WTC11 (cell line): ENCODE measurements at regions of chr11 and their contacts with region 1.

Region 1: GRCh38 chr11:35200811-35201341 is 61.9 kb downstream of the CD44 start:
- DNase-seq: no peak
- ATAC-seq: no peak
- H3K4me3 Mint-ChIP-seq: no peak overlapping the region
- H3K27ac Mint-ChIP-seq: no peak overlapping the region
- H3K4me1 Mint-ChIP-seq: peaks cover 6% of the 10 kb centered on the region
- H3K27me3 Mint-ChIP-seq: no peaks in the 10 kb centered on the region; the same call in 1 of the 2 replicates
- CTCF ChIP-seq: no peak

Region 2: DNA sequence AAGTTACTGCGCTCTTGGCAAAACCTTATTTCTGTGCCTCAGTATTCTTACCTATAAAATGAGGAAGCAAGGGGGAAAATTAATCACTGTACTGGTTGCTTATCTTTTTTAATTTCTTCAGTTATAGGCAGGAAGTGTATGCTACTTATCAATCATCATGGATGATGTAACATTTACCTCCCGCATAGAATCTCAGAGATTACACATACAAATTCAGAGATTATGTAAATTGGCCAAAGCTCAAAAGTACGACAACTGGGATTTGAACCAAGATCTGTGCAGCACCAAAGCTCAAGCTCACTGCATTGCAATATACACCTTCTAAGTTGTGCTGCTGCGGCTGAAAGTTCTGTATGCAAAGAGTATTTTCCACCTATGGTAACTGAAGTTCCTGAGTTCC is 201.4 kb before region 1 on chr11:
- CTCF ChIA-PET with region 1: no interaction called
- POLR2A ChIA-PET with region 1: interaction called, 12 read pairs
- DNase-seq: no peak
- ATAC-seq: no peak
- H3K4me3 Mint-ChIP-seq: no peak overlapping the region
- H3K27ac Mint-ChIP-seq: no peak overlapping the region
- H3K4me1 Mint-ChIP-seq: no peaks in the 10 kb centered on the region
- H3K27me3 Mint-ChIP-seq: no peaks in the 10 kb centered on the region
- CTCF ChIP-seq: no peak